Activated CD4-positive, alpha-beta memory T cell treated with anti-CD3 and anti-CD28 coated beads for 36 hours (primary cell): ENCODE measurements at regions of chr1 and their contacts with region 1.

Region 1: GRCh38 chr1:42319128-42319851 is 15.7 kb downstream of the FOXJ3 start:
- DNase-seq: peak; percentile 48
- H3K4me3 Mint-ChIP-seq: peak overlapping the region; percentile 58
- H3K27ac Mint-ChIP-seq: peak overlapping the region; percentile 86
- H3K4me1 Mint-ChIP-seq: peaks cover 90% of the 10 kb centered on the region
- H3K27me3 Mint-ChIP-seq: no peaks in the 10 kb centered on the region

Region 2: GRCh38 chr1:42282024-42282579 is 37.2 kb before region 1 on chr1:
- CTCF ChIA-PET with region 1: no interaction called
- POLR2A ChIA-PET with region 1: interaction called, 3 read pairs
- intact Hi-C with region 1: loop called (anchors 5 kb)
- DNase-seq: no peak
- H3K4me3 Mint-ChIP-seq: no peak overlapping the region
- H3K27ac Mint-ChIP-seq: no peak overlapping the region
- H3K4me1 Mint-ChIP-seq: peaks cover 54% of the 10 kb centered on the region
- H3K27me3 Mint-ChIP-seq: no peaks in the 10 kb centered on the region

Region 3: DNA sequence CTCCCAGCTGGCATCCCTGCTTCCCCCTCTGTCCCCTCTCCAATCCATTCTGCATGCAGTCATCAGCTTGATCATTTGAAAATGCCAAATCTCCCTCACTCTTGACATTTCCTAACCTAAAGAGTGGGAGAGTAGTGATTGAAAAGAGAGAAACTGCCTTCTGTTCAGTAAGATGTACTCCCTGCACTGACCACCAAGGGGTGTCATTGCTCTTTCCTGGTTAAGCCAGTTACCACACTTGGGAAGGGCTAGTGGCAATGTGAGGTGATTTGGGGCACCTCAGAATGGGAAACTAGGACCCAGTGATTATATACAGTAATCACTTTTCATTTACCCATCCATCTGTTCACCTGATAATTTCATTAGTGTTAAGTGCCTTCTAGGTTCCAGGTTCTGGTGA is 458.6 kb after region 1 on chr1:
- CTCF ChIA-PET with region 1: no interaction called
- POLR2A ChIA-PET with region 1: no interaction called
- intact Hi-C with region 1: no loop called
- DNase-seq: peak; percentile 41
- H3K4me3 Mint-ChIP-seq: no peak overlapping the region
- H3K27ac Mint-ChIP-seq: no peak overlapping the region
- H3K4me1 Mint-ChIP-seq: peaks cover 20% of the 10 kb centered on the region
- H3K27me3 Mint-ChIP-seq: no peaks in the 10 kb centered on the region